HEK293T (cell line): ENCODE measurements at regions of chr2 and their contacts with region 1.

Region 1: GRCh38 chr2:69436938-69437750 is at the start of gene NFU1:
- DNase-seq: peak; percentile 99

Region 2: DNA sequence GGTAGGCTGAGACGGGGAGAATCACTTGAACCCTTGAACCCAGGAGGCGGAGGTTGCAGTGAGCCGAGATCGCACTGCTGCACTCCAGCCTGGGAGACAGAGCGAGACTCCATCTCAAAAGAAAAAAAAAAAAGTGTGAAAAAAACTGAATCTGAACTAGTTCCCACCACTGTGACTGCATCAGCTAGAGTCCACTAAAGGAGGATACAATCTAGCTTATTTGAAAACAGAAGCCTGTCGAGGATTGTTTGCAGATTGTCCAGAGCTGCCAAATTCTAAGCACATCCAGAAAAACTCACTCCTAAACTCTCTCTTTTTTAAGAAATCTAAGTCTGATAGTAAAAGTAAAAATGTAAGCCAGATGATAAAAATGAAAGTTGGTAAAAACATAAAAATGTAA is 60.7 kb before region 1 on chr2:
- CTCF ChIA-PET with region 1: interaction called, 3 read pairs
- POLR2A ChIA-PET with region 1: interaction called, 13 read pairs
- DNase-seq: no peak

Region 3: GRCh38 chr2:69453475-69454129 is 16.5 kb after region 1 on chr2:
- CTCF ChIA-PET with region 1: no interaction called
- POLR2A ChIA-PET with region 1: interaction called, 14 read pairs
- DNase-seq: no peak